GM12878 (cell line): ENCODE measurements at regions of chr3 and their contacts with region 1.

Region 1: DNA sequence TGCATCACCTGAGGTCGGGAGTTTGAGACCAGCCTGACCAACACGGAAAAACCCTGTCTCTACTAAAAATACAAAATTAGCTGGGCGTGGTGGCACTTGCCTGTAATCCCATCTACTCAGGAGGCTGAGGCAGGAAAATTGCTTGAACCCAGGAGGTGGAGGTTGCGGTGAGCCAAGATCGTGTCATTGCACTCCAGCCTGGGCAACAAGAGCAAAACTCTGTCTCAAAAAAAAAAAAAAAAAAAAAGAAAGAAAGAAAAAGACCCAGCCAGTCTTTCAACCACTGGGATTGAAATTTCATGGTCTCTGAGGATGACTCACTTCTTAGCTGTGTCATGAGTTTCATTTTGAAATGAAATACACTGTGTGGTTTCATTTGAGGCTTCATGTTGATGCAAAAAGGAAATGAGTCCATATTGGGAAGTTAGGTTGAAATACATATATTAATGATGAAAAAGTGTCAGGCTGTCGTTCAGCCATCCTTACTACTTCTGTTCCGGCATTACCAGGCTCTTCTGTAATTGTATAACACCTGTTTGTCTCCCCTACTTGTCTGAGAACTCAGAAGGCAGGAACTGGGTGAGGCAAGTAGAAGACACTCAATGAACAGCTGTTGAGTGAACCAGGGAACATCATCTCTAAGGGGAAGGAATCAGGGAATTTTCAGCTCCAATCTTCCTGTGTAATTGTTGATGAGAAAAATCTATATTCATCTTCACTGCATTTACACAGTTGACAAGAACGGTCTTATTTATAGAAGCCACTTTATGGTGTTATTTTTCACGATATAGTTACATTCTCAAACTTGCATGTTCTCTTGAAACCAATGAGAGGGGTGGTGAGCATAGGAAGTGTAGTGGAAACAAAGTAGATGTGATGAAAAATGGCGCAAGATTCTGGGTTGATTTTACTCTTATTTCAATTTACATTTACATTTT is 87.4 kb downstream of the NFKBIZ start:
- DNase-seq: peak; percentile 95
- ATAC-seq: peak; percentile 82
- H3K4me3 ChIP-seq: peak overlapping the region; percentile 44; the same call in 1 of the 2 replicates
- H3K27ac ChIP-seq: peak overlapping the region; percentile 56
- H3K4me1 ChIP-seq: peaks cover 53% of the 10 kb centered on the region
- H3K27me3 ChIP-seq: no peaks in the 10 kb centered on the region
- CTCF ChIP-seq: no peak
- EP300 ChIP-seq: peak; percentile 91 to 94
- POLR2A ChIP-seq: no peak
- RAD21 ChIP-seq: peak; percentile 17; the same call in 1 of the 2 replicates

Region 2: GRCh38 chr3:101676765-101677435 is 259.8 kb before region 1 on chr3 and contains the start of gene ZBTB11:
- CTCF ChIA-PET with region 1: no interaction called
- POLR2A ChIA-PET with region 1: no interaction called
- RAD21 ChIA-PET with region 1: no interaction called
- SMC1A ChIA-PET with region 1: no interaction called
- in situ Hi-C with region 1: no loop called
- intact Hi-C with region 1: loop called (anchors 5 kb)
- DNase-seq: peak; percentile 99
- ATAC-seq: peak; percentile 87
- H3K4me3 ChIP-seq: peak within 1 kb of the TSS; percentile 78
- H3K27ac ChIP-seq: peak within 1 kb of the TSS; percentile 86
- H3K4me1 ChIP-seq: no peaks in the 10 kb centered on the region
- H3K27me3 ChIP-seq: no peaks in the 10 kb centered on the region
- CTCF ChIP-seq: peak; percentile 9 to 55 (median 35); a peak in 3 of 6 replicates
- EP300 ChIP-seq: 0 out of 4 replicates have a peak, but pooled peaks of 1 of the 2 experiments have one; percentile 14
- POLR2A ChIP-seq: peak; percentile 78
- RAD21 ChIP-seq: no peak
- polyA plus RNA-seq, gene ZBTB11: 3.5 to 5.0 TPM

Region 3: GRCh38 chr3:101809178-101810021 is 127.3 kb before region 1 on chr3:
- CTCF ChIA-PET with region 1: interaction called, 13 read pairs
- POLR2A ChIA-PET with region 1: no interaction called
- RAD21 ChIA-PET with region 1: interaction called, 8 read pairs
- SMC1A ChIA-PET with region 1: interaction called, 12 read pairs
- in situ Hi-C with region 1: no loop called
- intact Hi-C with region 1: loop called (anchors 5 kb)
- DNase-seq: no peak
- ATAC-seq: peak; percentile 64
- H3K4me3 ChIP-seq: no peak overlapping the region
- H3K27ac ChIP-seq: no peak overlapping the region
- H3K4me1 ChIP-seq: peaks cover 15% of the 10 kb centered on the region
- H3K27me3 ChIP-seq: no peaks in the 10 kb centered on the region
- CTCF ChIP-seq: peak; percentile 56 to 84 (median 65); a peak in 5 of 6 replicates
- EP300 ChIP-seq: no peak
- POLR2A ChIP-seq: no peak
- RAD21 ChIP-seq: peak; percentile 82

Region 4: DNA sequence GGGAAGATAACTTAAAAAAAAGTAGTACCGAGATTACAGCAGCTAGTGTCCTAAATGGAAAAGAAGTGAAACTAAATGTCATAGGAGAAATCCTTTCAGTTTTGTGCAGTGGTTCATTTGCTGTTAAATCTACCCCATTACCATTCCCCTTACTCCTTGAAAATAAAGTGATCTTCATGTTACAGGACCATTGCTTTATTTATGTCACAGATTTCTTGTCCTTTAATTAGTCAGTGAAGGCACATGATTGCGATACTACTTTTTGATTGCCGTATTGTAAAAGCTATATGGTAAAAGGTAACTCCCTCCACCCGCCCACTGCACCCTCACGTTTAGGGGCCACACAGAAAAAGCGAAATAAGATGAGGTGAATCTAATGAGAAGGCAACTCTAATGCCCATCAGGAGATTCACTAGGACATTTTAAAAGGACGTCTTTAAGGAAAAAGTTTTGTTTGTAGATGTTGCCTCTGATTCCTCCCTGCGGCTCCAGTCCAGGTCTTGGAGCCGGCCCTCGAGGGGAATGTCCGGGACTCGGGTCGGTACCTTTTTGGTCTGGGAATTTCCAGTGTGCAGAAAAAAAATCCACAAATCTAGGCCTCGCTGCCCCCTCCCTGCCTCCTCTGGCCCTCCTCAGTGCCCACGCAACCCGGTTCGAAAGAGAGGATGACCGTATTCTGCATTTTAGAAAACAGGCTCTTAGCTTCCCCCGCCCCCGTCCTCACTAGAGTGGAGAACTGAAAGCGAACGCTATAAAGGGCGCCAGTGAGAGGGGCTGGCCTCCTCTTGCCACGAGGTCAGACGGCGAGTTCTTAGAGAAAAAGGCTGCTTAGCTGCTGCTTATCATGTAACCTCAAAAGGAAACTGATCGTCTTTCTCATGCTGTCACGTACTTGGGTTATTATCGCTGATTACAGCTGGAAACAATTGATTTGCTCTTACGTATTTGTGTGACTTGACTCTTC is 109.2 kb before region 1 on chr3:
- CTCF ChIA-PET with region 1: interaction called, 3 read pairs
- POLR2A ChIA-PET with region 1: interaction called, 10 read pairs
- RAD21 ChIA-PET with region 1: interaction called, 43 read pairs
- SMC1A ChIA-PET with region 1: interaction called, 11 read pairs
- in situ Hi-C with region 1: no loop called
- intact Hi-C with region 1: no loop called
- DNase-seq: peak; percentile 93
- ATAC-seq: peak; percentile 83
- H3K4me3 ChIP-seq: peak overlapping the region; percentile 78
- H3K27ac ChIP-seq: peak overlapping the region; percentile 92
- H3K4me1 ChIP-seq: peaks cover 11% of the 10 kb centered on the region
- H3K27me3 ChIP-seq: no peaks in the 10 kb centered on the region
- CTCF ChIP-seq: no peak
- EP300 ChIP-seq: peak; percentile 36 to 84
- POLR2A ChIP-seq: peak; percentile 92
- RAD21 ChIP-seq: peak; percentile 38; the same call in 1 of the 2 replicates

Region 5: GRCh38 chr3:101849051-101849720 is 87.5 kb before region 1 on chr3 and contains the start of gene NFKBIZ:
- CTCF ChIA-PET with region 1: interaction called, 4 read pairs
- POLR2A ChIA-PET with region 1: interaction called, 12 read pairs
- RAD21 ChIA-PET with region 1: interaction called, 21 read pairs
- SMC1A ChIA-PET with region 1: interaction called, 48 read pairs
- in situ Hi-C with region 1: no loop called
- intact Hi-C with region 1: loop called (anchors 1 kb)
- DNase-seq: no peak
- ATAC-seq: peak; percentile 78
- H3K4me3 ChIP-seq: peak within 1 kb of the TSS; percentile 75
- H3K27ac ChIP-seq: peak within 1 kb of the TSS; percentile 93
- H3K4me1 ChIP-seq: peaks cover 16% of the 10 kb centered on the region
- H3K27me3 ChIP-seq: no peaks in the 10 kb centered on the region
- CTCF ChIP-seq: no peak
- EP300 ChIP-seq: no peak
- POLR2A ChIP-seq: peak; percentile 95
- RAD21 ChIP-seq: no peak
- polyA plus RNA-seq, gene NFKBIZ: 6.3 to 8.9 TPM

Region 6: DNA sequence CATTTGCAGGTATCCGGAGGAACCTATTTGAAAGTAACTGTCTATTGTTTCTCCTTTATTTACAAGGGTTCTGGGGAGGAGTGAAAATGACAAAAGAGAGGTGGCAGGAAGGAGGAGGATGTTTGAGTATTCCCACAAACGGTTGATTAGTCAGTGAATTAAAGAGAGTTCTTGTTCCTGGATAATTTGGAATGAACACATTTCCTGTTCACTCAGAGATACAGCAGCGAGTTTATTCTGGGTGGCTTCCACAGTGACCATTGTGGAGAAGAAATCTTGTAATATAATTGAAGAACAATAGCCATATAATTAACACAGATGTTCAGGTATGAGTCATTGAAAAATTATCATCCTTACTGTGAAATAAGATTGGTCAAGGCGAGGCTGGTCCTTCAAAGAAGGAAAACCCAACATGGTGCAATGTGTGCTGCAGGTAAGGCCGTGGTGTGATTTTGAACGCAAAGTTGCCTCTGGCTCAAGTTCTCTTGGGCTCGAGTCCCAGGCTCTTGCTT is 10.0 kb before region 1 on chr3:
- CTCF ChIA-PET with region 1: interaction called, 4 read pairs
- POLR2A ChIA-PET with region 1: interaction called, 6 read pairs
- RAD21 ChIA-PET with region 1: interaction called, 20 read pairs
- SMC1A ChIA-PET with region 1: interaction called, 33 read pairs
- in situ Hi-C with region 1: no loop called
- intact Hi-C with region 1: no loop called
- DNase-seq: no peak
- ATAC-seq: no peak
- H3K4me3 ChIP-seq: no peak overlapping the region
- H3K27ac ChIP-seq: no peak overlapping the region
- H3K4me1 ChIP-seq: no peaks in the 10 kb centered on the region; the same call in 1 of the 2 replicates
- H3K27me3 ChIP-seq: no peaks in the 10 kb centered on the region
- CTCF ChIP-seq: no peak
- EP300 ChIP-seq: no peak
- POLR2A ChIP-seq: no peak
- RAD21 ChIP-seq: no peak

Region 7: GRCh38 chr3:101988591-101988990 is 51.9 kb after region 1 on chr3:
- CTCF ChIA-PET with region 1: no interaction called
- POLR2A ChIA-PET with region 1: interaction called, 9 read pairs
- RAD21 ChIA-PET with region 1: no interaction called
- SMC1A ChIA-PET with region 1: interaction called, 11 read pairs
- in situ Hi-C with region 1: no loop called
- intact Hi-C with region 1: loop called (anchors 2 kb)
- DNase-seq: no peak
- ATAC-seq: peak; percentile 65
- H3K4me3 ChIP-seq: no peak overlapping the region
- H3K27ac ChIP-seq: peak overlapping the region; percentile 59
- H3K4me1 ChIP-seq: peaks cover 28% of the 10 kb centered on the region
- H3K27me3 ChIP-seq: no peaks in the 10 kb centered on the region
- CTCF ChIP-seq: no peak
- EP300 ChIP-seq: 0 out of 4 replicates have a peak, but pooled peaks of 1 of the 2 experiments have one; percentile 30
- POLR2A ChIP-seq: no peak
- RAD21 ChIP-seq: no peak

Region 8: DNA sequence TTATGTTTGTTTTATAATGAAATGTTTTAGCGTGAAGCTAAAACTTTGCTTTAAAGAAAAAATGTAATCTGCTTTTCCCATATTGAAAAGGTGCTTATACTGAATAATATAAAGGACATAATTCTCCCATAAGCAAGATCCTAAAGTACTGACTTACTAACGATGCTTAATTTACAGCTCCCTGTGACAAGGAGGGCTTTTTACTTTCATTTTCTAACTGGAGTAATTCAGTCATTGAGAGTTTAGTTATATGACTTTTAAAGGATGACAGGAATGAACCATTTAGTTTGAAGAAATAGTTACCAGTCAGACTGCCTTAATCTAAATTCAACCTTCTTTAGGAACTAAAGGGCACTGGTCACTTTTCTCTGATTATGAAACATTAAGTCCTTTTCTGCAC is 478.9 kb after region 1 on chr3:
- CTCF ChIA-PET with region 1: no interaction called
- POLR2A ChIA-PET with region 1: no interaction called
- RAD21 ChIA-PET with region 1: no interaction called
- SMC1A ChIA-PET with region 1: no interaction called
- in situ Hi-C with region 1: no loop called
- intact Hi-C with region 1: no loop called
- DNase-seq: no peak
- ATAC-seq: no peak
- H3K4me3 ChIP-seq: no peak overlapping the region
- H3K27ac ChIP-seq: no peak overlapping the region
- H3K4me1 ChIP-seq: no peaks in the 10 kb centered on the region
- H3K27me3 ChIP-seq: no peaks in the 10 kb centered on the region
- CTCF ChIP-seq: no peak
- EP300 ChIP-seq: no peak
- POLR2A ChIP-seq: no peak
- RAD21 ChIP-seq: no peak